ENCODE measurements at regions of chr16 and their contacts with region 1.

Region 1: GRCh38 chr16:50665128-50665878 is 15.8 kb downstream of the SNX20 start:
- DNase-seq: peak; percentile 76
- H3K4me3 Mint-ChIP-seq: peak overlapping the region; percentile 66
- H3K27ac Mint-ChIP-seq: peak overlapping the region; percentile 68
- H3K4me1 Mint-ChIP-seq: peaks cover 43% of the 10 kb centered on the region
- H3K27me3 Mint-ChIP-seq: no peaks in the 10 kb centered on the region

Region 2: GRCh38 chr16:50152807-50153452 is 512.4 kb before region 1 on chr16 and contains the start of gene TENT4B:
- intact Hi-C with region 1: loop called (anchors 5 kb)
- DNase-seq: peak; percentile 86
- H3K4me3 Mint-ChIP-seq: peak within 1 kb of the TSS; percentile 92
- H3K27ac Mint-ChIP-seq: peak within 1 kb of the TSS; percentile 94
- H3K4me1 Mint-ChIP-seq: peaks cover 41% of the 10 kb centered on the region
- H3K27me3 Mint-ChIP-seq: no peaks in the 10 kb centered on the region
- total RNA-seq, gene TENT4B: 19.8 and 20.0 TPM in 2 replicates

Region 3: DNA sequence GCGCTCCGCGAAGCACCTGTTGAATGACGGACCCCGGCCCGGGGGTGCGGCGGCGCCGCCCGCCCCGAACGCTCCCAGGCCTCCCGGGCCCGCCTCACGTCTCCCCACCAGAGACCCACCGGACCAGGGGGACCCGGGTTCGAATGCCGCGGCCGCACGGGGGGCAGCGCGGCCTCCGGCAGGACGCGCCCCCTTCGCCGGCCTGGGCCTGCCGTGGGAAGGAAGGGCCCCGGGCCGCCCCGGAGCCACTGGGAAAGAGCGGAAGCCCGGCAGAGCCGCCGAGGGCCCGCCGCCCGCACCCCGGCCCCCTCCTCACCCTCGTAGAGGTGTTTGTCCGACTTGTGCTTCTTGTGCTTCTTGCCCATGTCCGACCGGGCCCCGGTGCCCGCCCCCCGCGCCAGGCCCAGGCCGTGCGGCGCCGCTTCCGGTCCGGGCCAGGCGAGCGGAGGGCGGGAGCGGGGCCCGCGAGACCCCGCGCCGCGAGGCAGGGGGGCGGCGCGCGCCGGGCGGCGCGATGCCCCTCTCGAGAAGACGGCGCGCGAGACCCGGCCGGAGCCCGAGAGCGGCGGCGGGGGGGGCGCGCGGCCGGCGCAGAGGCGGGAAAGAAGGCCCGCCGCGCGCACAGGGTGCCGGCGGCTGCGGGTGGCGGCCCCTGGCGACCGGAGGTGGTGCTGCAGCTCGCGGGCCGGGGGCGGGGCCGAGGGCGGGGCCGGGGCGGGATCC is 296.7 kb before region 1 on chr16 and contains the start of gene BRD7:
- intact Hi-C with region 1: loop called (anchors 2 kb)
- DNase-seq: peak; percentile 56
- H3K4me3 Mint-ChIP-seq: peak within 1 kb of the TSS; percentile 96
- H3K27ac Mint-ChIP-seq: peak within 1 kb of the TSS; percentile 94
- H3K4me1 Mint-ChIP-seq: peaks cover 51% of the 10 kb centered on the region
- H3K27me3 Mint-ChIP-seq: no peaks in the 10 kb centered on the region
- total RNA-seq, gene BRD7: 88.8 and 91.0 TPM in 2 replicates

Region 4: DNA sequence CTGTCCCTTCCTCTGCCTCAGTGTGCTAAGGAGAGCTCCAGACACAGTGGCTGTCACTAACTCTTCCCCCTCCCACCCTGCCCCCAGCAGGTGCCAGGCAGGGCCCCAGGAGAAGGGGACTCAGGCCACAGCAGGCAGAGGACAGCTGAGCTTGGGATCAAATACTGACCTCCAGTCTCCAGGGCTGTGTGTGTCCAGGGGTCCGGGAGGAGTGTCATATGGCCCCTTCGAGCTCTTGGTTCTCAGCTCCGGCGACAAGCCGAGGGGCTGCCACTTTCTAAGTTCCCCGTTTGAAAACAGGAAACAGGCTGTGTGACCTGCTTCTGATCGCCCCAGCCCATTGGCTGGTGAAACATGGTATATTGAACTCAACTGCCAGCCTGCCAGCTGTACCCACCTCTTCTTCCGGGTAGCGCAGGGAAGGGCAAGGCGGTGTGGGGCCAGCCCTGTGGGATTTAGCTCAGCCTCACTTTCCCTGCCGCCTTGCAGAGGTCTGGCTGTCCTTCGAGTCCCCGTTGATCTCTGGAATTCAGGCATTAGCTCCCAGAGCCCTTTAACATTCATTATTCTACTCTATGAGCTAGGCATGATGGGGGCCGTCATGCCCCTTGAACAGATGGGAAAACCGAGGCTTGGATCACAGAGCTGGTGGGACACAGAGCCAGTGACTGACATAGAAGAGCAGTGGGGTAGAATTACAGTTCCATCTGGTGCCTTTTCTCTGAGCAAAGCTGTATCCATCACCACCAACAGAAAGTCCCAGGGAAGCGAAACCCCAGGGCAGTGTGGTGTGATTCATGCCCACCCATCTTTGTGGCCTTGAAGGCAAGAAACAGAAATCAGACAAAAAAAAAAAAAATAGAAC is 15.9 kb after region 1 on chr16 and contains the start of gene SNX20:
- intact Hi-C with region 1: loop called (anchors 2 kb)
- DNase-seq: peak; percentile 41
- H3K4me3 Mint-ChIP-seq: peak within 1 kb of the TSS; percentile 82
- H3K27ac Mint-ChIP-seq: peak within 1 kb of the TSS; percentile 85
- H3K4me1 Mint-ChIP-seq: peaks cover 90% of the 10 kb centered on the region
- H3K27me3 Mint-ChIP-seq: no peaks in the 10 kb centered on the region
- total RNA-seq, gene SNX20: 34.3 TPM in 2 replicates

Region 5: GRCh38 chr16:50747207-50747956 is 82.1 kb after region 1 on chr16:
- intact Hi-C with region 1: loop called (anchors 1 kb)
- DNase-seq: peak; percentile 40
- H3K4me3 Mint-ChIP-seq: peak overlapping the region; percentile 85
- H3K27ac Mint-ChIP-seq: peak overlapping the region; percentile 92
- H3K4me1 Mint-ChIP-seq: peaks cover 74% of the 10 kb centered on the region
- H3K27me3 Mint-ChIP-seq: no peaks in the 10 kb centered on the region